ENCODE measurements at regions of chr1 and their contacts with region 1.

Region 1: DNA sequence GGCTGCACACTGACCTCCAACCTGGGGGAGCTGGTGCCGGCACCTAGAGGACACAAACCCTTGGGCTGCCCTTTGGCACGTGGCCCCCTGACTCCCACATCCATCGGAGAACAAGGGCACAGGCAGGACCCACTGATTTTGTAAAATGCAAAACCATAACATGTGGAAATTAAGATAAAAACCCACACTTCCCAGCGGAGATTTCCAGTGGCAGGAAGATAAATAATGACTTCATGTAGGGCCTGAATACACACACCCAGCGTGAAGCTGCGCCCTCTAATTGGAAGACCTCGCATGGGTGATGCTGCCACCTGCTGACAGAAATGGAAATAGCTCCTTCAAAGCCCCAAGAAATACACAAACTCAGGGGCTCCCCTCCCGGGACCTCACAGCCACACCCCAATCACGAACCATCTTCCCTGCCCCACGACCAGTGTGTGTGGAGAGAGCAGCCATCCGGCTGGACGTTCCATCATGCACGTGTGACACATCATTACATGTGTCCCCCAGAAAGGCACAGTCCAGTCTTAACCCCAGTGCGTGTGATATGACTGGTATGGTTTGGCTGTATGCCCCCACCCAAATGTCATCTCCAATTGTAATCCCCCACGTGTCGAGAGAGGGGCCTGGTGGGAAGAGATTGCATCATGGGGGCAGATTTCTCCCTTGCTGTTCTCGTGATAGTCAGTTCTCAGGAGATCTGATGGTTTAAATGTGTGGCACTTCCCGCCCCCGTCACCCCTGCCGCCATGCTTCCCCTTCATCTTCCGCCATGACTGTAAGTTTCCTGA is 5.7 kb upstream of the TPRG1L start:
- DNase-seq: peak; percentile 63
- H3K4me3 Mint-ChIP-seq: no peak overlapping the region
- H3K27ac Mint-ChIP-seq: no peak overlapping the region
- H3K4me1 Mint-ChIP-seq: peaks cover 31% of the 10 kb centered on the region
- H3K27me3 Mint-ChIP-seq: no peaks in the 10 kb centered on the region
- CTCF ChIP-seq: peak; percentile 70

Region 2: GRCh38 chr1:3453203-3453761 is 165.8 kb before region 1 on chr1:
- CTCF ChIA-PET with region 1: interaction called, 41 read pairs
- intact Hi-C with region 1: loop called (anchors 2 kb)
- DNase-seq: peak; percentile 86
- H3K4me3 Mint-ChIP-seq: peak overlapping the region; percentile 72
- H3K27ac Mint-ChIP-seq: no peak overlapping the region
- H3K4me1 Mint-ChIP-seq: peaks cover 11% of the 10 kb centered on the region
- H3K27me3 Mint-ChIP-seq: peaks cover 18% of the 10 kb centered on the region
- CTCF ChIP-seq: peak; percentile 84

Region 3: GRCh38 chr1:3491291-3492246 is 127.5 kb before region 1 on chr1:
- CTCF ChIA-PET with region 1: interaction called, 10 read pairs
- intact Hi-C with region 1: loop called (anchors 2 kb)
- DNase-seq: peak; percentile 75
- H3K4me3 Mint-ChIP-seq: no peak overlapping the region
- H3K27ac Mint-ChIP-seq: no peak overlapping the region
- H3K4me1 Mint-ChIP-seq: no peaks in the 10 kb centered on the region
- H3K27me3 Mint-ChIP-seq: no peaks in the 10 kb centered on the region
- CTCF ChIP-seq: peak; percentile 95

Region 4: DNA sequence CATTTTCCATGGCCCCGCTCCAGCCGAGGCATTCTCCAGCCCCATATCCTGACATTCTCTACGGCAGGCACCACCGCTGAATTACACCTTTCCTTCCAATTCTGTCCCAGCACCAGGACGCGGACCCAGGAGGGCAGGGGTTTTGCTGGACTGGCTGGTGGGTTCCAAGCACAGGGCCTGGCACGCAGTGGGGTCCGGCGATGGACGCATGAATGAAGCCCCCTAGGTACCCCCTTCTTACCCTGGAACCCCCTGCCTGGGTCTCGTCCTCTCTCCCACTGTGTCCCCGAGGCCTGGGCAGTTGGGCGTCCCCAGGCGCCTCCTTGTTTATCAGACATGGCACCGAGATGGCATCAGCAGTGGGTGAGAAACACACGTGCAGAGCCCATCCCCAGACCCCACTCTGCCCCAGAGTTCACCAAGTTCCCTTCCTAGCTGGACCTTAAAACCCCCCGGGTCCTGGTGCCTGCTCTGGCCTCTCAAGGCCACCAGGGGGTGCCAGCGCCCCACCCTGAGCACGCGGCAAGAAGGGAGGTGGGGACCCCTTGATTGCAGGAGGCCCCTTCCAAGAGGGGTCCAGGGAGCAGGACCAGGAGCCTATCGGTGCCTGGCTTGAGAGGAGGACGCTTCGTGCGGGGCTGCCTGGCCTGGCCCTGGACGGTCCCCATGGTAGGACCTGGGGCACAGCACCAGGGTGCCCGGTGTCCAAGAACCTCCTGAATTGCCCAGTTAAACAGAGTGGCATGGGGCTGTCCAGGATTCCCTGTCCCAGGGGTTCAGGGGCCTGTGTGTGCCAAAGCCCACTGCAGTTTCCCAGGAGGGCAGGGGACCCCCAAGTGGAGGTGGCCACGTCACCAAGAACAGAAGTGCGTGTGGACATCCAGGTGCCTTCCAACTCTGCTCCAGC is 53.9 kb before region 1 on chr1:
- CTCF ChIA-PET with region 1: interaction called, 12 read pairs
- intact Hi-C with region 1: loop called (anchors 1 kb)
- DNase-seq: peak; percentile 20
- H3K4me3 Mint-ChIP-seq: no peak overlapping the region
- H3K27ac Mint-ChIP-seq: no peak overlapping the region
- H3K4me1 Mint-ChIP-seq: no peaks in the 10 kb centered on the region
- H3K27me3 Mint-ChIP-seq: no peaks in the 10 kb centered on the region
- CTCF ChIP-seq: peak; percentile 90

Region 5: DNA sequence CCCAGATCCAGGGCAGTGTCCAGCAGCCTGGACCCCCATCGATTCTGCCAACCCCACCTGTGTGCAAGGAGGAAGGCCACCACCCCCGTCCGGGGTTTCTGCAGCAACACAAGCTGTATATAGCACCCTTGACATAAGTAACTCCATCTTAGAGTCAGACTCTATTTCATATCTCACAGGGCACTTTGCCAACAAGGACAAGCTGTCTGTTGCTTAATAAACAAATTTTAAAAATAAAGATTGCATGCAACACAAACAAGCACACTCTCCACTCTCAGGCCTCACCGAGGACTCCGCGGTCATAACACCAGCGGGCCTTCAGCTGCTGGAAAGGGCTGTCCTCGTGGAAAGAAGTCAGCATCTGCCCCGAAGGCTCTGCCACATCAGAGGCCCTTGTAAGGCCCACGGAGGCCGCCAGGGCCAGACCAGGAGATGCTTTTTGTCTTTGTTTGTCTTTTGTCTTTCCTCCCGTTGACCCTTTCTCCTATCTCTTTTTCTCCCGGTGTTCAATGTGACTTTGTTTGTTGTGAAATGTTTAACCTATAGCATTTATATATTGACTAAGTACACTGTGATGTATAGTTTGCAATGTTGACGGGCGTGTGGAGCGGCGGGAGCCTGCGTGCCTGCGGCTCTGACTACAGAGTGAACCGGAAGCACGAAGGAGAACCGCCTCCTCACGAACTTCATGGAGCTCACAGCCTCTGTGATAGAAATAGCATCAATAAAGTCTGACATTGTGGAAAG is 32.0 kb before region 1 on chr1:
- CTCF ChIA-PET with region 1: interaction called, 26 read pairs
- intact Hi-C with region 1: loop called (anchors 2 kb)
- DNase-seq: peak; percentile 20
- H3K4me3 Mint-ChIP-seq: no peak overlapping the region
- H3K27ac Mint-ChIP-seq: peak overlapping the region; percentile 47
- H3K4me1 Mint-ChIP-seq: peaks cover 15% of the 10 kb centered on the region
- H3K27me3 Mint-ChIP-seq: no peaks in the 10 kb centered on the region
- CTCF ChIP-seq: no peak

Region 6: DNA sequence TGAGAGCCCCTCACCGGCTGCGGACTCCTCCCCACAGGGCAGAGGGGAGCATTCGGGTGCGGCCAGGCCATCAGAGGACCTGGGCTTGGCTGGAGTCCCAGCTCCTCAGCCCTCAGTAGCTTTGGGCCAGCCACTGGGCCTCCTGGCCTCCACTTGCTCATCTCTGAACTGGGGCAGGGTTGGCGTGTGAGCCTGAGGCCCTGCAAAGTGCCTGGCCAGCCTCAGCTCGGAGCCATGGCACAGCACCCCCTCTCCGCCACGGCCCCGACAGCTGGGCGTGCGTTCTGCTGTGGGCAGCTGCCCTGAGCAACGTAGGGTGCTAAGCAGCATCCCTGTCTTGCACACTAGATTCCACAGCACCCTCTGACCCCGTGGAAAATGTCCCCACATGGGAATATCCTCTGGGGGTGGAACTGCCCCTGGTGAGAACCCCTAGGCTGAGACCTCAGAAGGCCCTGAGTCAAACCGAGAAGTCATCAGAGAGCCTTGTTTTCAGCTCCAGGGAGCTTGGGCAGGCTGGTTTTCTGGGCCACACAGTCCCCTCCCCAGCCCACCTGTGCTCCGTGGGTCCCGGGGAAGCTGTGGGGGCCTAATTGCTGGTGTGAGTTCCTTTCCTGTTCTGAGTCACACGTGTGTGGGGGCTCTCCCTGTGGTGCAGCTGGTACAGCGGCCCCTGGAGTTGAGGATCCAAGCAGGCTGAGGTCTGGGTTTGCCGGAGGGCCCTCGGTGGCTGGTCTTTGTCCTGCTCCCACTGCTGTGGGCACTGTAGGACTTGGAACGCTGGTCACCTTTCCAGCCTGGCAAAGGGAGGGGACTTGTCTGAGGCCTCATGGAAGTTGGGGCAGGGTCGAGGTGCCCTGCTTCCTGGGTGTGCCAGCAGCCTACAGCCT is 57.8 kb after region 1 on chr1:
- CTCF ChIA-PET with region 1: no interaction called
- intact Hi-C with region 1: no loop called
- DNase-seq: no peak
- H3K4me3 Mint-ChIP-seq: no peak overlapping the region
- H3K27ac Mint-ChIP-seq: no peak overlapping the region
- H3K4me1 Mint-ChIP-seq: peaks cover 14% of the 10 kb centered on the region
- H3K27me3 Mint-ChIP-seq: peaks cover 40% of the 10 kb centered on the region
- CTCF ChIP-seq: no peak

Region 7: DNA sequence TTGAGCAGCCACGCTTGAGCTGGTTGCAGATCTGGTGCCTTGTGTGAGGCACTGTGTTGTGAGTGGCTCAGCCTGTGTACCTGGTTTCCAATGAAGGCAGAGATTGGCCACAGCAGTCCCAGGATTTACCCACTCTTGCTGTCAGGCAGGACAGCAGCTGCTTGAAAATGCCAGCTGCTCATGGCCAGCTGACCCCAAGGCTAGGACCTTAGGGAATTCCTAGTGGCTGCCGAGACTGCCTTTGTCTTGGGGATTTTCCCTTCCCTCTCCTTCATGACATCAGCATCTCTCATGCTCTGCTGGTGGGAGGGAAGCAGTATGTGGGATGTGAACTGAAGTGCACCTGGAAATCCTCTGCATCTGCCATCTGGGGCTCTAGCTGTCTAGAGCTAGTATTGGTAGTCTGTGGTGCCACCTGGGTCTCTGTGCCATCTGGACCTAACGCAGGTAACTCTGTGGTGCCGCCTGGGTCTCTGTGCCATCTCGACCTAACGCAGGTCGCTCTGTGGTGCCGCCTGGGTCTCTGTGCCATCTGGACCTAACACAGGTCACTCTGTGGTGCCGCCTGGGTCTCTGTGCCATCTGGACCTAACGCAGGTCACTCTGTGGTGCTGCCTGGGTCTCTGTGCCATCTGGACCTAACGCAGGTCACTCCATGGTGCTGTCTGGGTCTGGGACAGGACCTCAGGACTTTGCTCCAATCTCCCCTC is 181.1 kb after region 1 on chr1:
- CTCF ChIA-PET with region 1: interaction called, 10 read pairs
- intact Hi-C with region 1: no loop called
- DNase-seq: no peak
- H3K4me3 Mint-ChIP-seq: no peak overlapping the region
- H3K27ac Mint-ChIP-seq: no peak overlapping the region
- H3K4me1 Mint-ChIP-seq: peaks cover 26% of the 10 kb centered on the region
- H3K27me3 Mint-ChIP-seq: peaks cover 46% of the 10 kb centered on the region
- CTCF ChIP-seq: no peak